ENCODE measurements at regions of chr16 and their contacts with region 1.

Region 1: DNA sequence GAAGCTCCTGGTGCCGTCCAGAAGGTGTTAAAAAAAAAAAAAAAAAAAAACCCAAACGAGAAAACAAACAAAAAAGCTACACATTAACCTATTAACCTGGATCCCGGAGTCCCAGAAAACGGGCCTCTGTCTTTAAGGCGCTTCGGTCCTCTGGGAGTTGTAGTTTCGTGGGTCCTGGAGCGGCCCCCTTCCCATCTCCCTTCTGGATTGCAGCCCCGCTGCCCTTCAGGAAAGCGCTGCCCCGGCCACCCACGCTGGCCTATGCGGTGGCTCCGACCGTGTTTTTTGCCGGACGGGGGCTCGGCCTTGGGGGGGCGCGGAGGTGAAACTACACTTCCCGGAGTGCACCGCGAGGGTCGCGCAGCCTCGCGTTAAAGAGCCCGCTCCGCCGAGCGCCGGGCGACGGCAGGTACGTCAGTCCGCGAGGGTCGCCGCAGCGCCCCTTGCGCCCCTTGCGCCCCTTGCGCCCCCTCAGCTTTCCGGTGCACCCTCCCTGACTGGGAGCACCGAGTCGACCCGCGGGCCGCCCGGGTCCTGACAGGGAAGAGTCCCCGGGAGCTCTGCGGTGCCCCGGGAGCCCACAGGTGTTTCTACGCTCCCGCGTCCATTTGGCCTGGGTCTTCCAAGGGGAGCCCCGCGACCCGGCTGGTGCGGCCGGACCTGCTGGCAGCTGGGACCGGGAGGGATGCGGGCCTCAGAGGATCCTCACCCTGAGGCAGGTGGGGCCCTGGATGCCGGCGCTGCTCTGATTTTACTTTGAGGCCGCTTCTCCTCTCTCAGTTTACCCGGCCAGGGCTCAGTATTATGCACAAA is at the start of gene FCSK:
- DNase-seq: peak in 1 of 2 experiments; percentile 67
- H3K4me3 ChIP-seq: peak within 1 kb of the TSS; percentile 96
- H3K27ac ChIP-seq: peak within 1 kb of the TSS; percentile 89
- H3K4me1 ChIP-seq: peaks cover 14% of the 10 kb centered on the region
- H3K27me3 ChIP-seq: no peaks in the 10 kb centered on the region
- CTCF ChIP-seq: no peak
- total RNA-seq, gene FCSK: 17.0 and 19.3 TPM in 2 replicates

Region 2: GRCh38 chr16:70428178-70428998 is 26.0 kb before region 1 on chr16:
- CTCF ChIA-PET with region 1: no interaction called
- POLR2A ChIA-PET with region 1: no interaction called
- intact Hi-C with region 1: loop called (anchors 1 kb)
- DNase-seq: peak; percentile 82 to 89
- H3K4me3 ChIP-seq: peak overlapping the region; percentile 13; the same call in 1 of the 2 replicates
- H3K27ac ChIP-seq: peak overlapping the region; percentile 75
- H3K4me1 ChIP-seq: peaks cover 52% of the 10 kb centered on the region
- H3K27me3 ChIP-seq: no peaks in the 10 kb centered on the region
- CTCF ChIP-seq: no peak

Region 3: GRCh38 chr16:70438969-70439862 is 15.2 kb before region 1 on chr16 and contains the start of gene ST3GAL2:
- CTCF ChIA-PET with region 1: no interaction called
- POLR2A ChIA-PET with region 1: no interaction called
- intact Hi-C with region 1: loop called (anchors 2 kb)
- DNase-seq: peak; percentile 55 to 86
- H3K4me3 ChIP-seq: peak within 1 kb of the TSS; percentile 55
- H3K27ac ChIP-seq: no peak within 1 kb of the TSS
- H3K4me1 ChIP-seq: 0 out of 2 replicates have a peak, but pooled peaks cover 6% of the 10 kb centered on the region
- H3K27me3 ChIP-seq: no peaks in the 10 kb centered on the region
- CTCF ChIP-seq: no peak
- total RNA-seq, gene ST3GAL2: 9.7 and 13.7 TPM in 2 replicates